ENCODE measurements at regions of chr5 and their contacts with region 1.

Region 1: DNA sequence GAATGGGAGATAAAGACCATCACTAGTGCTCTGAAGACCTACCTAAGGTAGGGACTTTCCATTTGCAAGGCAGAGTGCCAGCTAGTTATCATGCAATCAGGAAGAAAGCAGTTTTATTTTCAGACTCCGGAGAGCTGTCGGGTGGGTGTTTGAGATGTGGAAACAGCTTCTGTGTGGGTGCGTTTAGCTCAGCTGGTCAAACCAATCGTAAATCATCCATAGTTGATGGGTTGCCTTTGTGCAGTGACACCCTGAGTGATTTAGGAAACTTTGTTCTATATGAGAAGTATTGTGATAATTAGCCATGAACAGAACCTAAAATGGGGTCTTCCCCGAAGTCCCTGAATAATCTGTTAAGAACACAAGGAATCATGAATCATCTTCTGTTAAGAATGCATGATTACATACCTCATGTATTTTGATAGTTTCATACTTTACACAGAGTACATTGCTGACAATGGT is 284.3 kb downstream of the ARHGAP26 start:
- DNase-seq: peak; percentile 49
- ATAC-seq: peak; percentile 40
- H3K4me3 Mint-ChIP-seq: no peak overlapping the region
- H3K27ac Mint-ChIP-seq: peak overlapping the region; percentile 90
- H3K4me1 Mint-ChIP-seq: peaks cover 75% of the 10 kb centered on the region
- H3K27me3 Mint-ChIP-seq: no peaks in the 10 kb centered on the region

Region 2: GRCh38 chr5:143016777-143017516 is 37.6 kb before region 1 on chr5:
- CTCF ChIA-PET with region 1: interaction called, 3 read pairs
- POLR2A ChIA-PET with region 1: no interaction called
- intact Hi-C with region 1: loop called (anchors 2 to 5 kb)
- DNase-seq: peak; percentile 75
- ATAC-seq: peak; percentile 31
- H3K4me3 Mint-ChIP-seq: no peak overlapping the region
- H3K27ac Mint-ChIP-seq: no peak overlapping the region
- H3K4me1 Mint-ChIP-seq: peaks cover 15% of the 10 kb centered on the region
- H3K27me3 Mint-ChIP-seq: no peaks in the 10 kb centered on the region

Region 3: GRCh38 chr5:143066556-143067281 is 12.2 kb after region 1 on chr5:
- CTCF ChIA-PET with region 1: interaction called, 4 read pairs
- POLR2A ChIA-PET with region 1: no interaction called
- intact Hi-C with region 1: loop called in 1 of 2 experiments (anchors 1 kb)
- DNase-seq: peak; percentile 63
- ATAC-seq: peak; percentile 69
- H3K4me3 Mint-ChIP-seq: no peak overlapping the region
- H3K27ac Mint-ChIP-seq: peak overlapping the region; percentile 75
- H3K4me1 Mint-ChIP-seq: peaks cover 25% of the 10 kb centered on the region
- H3K27me3 Mint-ChIP-seq: no peaks in the 10 kb centered on the region

Region 4: GRCh38 chr5:143188692-143189091 is 134.2 kb after region 1 on chr5:
- CTCF ChIA-PET with region 1: no interaction called
- POLR2A ChIA-PET with region 1: no interaction called
- intact Hi-C with region 1: loop called in 1 of 2 experiments (anchors 2 kb)
- DNase-seq: no peak
- ATAC-seq: peak; percentile 67
- H3K4me3 Mint-ChIP-seq: no peak overlapping the region
- H3K27ac Mint-ChIP-seq: peak overlapping the region; percentile 71
- H3K4me1 Mint-ChIP-seq: peaks cover 39% of the 10 kb centered on the region
- H3K27me3 Mint-ChIP-seq: no peaks in the 10 kb centered on the region

Region 5: GRCh38 chr5:143355720-143356119 is 301.2 kb after region 1 on chr5:
- CTCF ChIA-PET with region 1: no interaction called
- POLR2A ChIA-PET with region 1: no interaction called
- intact Hi-C with region 1: loop called in 1 of 2 experiments (anchors 5 kb)
- DNase-seq: peak; percentile 59
- ATAC-seq: peak; percentile 34
- H3K4me3 Mint-ChIP-seq: no peak overlapping the region
- H3K27ac Mint-ChIP-seq: no peak overlapping the region
- H3K4me1 Mint-ChIP-seq: peaks cover 77% of the 10 kb centered on the region
- H3K27me3 Mint-ChIP-seq: no peaks in the 10 kb centered on the region

Measured in activated CD4-positive, alpha-beta T cell treated with anti-CD3 and anti-CD28 coated beads for 36 hours (primary cell).